ENCODE measurements at regions of chr7 and their contacts with region 1.

Region 1: DNA sequence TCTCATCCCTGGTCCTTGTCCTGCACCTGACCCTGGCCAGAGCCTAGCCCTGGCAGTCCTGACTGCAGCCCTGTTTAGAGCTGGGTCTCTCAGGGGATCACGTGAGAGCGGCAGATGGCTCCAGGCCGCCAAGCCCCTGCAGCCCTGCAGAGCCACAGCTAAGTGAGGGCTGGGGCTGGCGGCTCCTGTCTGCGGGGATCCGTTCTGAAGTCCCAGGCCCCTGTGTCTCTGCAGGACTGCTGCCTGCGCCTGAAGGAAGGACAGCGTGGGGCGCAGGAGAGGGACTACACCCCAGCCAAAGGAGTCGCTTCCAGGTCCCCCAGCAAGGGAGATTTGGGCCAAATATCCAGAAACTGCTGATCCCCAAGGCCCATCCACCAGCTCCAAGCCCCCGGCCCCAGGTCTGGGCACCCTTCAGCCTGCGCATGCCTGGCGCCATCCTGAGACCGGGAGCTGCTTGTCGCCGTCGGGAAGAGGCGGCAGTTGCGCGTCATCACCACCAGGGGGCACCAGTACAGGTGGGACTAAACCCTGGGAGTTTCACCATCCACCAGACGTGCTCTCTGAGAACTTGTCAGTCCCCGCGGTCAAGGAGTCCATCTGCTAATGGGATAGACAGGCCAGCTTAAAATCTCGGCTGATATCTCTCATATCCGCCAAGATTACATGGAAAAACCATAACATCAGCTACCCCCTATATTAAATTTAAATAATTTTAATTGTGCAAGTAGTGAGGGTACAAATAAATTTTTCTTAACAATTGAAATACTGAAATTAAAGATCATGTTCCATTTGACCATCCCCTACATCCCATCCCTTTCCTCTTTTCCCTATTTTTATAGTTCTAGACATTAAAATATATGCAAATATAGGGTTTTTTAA is 25.1 kb upstream of the GHRHR start:
- DNase-seq: peak; percentile 67
- H3K4me3 ChIP-seq: no peak overlapping the region
- H3K27ac ChIP-seq: no peak overlapping the region
- H3K4me1 ChIP-seq: no peaks in the 10 kb centered on the region
- CTCF ChIP-seq: peak; percentile 87

Region 2: DNA sequence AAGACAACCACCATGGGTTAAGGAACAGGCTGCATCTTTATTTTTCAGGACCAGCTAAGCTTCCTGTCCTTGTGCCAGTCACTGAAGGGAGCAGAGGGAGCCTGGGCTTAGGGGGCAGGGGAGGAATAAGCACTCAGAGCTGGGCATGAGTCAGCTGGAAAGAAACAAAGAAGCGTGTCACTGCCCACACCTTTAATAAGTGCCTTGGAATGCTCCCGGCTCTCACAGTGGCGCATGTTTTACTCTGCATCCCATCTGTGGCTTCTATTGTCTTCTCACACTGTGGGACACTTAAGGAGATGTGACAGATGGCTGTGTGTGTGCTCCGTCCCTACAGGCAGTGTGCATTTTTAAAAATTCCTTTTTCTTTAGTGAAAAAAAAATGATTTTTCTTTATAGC is 732.2 kb before region 1 on chr7:
- CTCF ChIA-PET with region 1: no interaction called
- POLR2A ChIA-PET with region 1: no interaction called
- intact Hi-C with region 1: no loop called
- DNase-seq: no peak
- H3K4me3 ChIP-seq: no peak overlapping the region
- H3K27ac ChIP-seq: no peak overlapping the region
- H3K4me1 ChIP-seq: peaks cover 9% of the 10 kb centered on the region
- CTCF ChIP-seq: no peak

Region 3: GRCh38 chr7:30974605-30975255 is 36.1 kb after region 1 on chr7:
- CTCF ChIA-PET with region 1: interaction called, 4 read pairs
- POLR2A ChIA-PET with region 1: interaction called, 6 read pairs
- intact Hi-C with region 1: loop called (anchors 1 kb)
- DNase-seq: peak; percentile 79
- H3K4me3 ChIP-seq: no peak overlapping the region
- H3K27ac ChIP-seq: peak overlapping the region; percentile 29
- H3K4me1 ChIP-seq: peaks cover 46% of the 10 kb centered on the region
- CTCF ChIP-seq: peak; percentile 82

Region 4: DNA sequence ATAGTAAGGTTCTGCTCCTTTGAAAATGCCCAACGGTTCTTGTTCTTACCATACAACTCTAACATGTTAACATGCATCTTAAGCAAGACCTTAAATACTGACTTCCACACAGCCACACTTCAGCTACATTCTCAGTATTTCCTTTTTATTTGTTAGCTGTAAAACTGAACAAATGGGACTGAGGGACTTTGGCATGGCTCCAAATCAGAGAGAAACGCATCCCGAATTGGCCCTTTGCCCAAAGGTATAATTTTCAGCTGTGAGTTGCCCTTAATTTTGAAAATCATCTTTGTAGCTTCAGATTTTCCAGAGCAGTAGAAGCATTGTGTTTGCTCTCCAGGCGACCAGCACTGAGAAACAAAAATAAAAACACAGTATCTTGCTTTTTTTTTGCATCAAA is 345.4 kb after region 1 on chr7:
- CTCF ChIA-PET with region 1: no interaction called
- POLR2A ChIA-PET with region 1: no interaction called
- intact Hi-C with region 1: no loop called
- DNase-seq: no peak
- H3K4me3 ChIP-seq: no peak overlapping the region
- H3K27ac ChIP-seq: no peak overlapping the region
- H3K4me1 ChIP-seq: no peaks in the 10 kb centered on the region
- CTCF ChIP-seq: no peak